ENCODE measurements at regions of chr9 and their contacts with region 1.

Region 1: GRCh38 chr9:127525401-127526187 is 74.3 kb downstream of the LRSAM1 start:
- DNase-seq: peak; percentile 36
- H3K4me3 Mint-ChIP-seq: no peak overlapping the region
- H3K27ac Mint-ChIP-seq: no peak overlapping the region
- H3K4me1 Mint-ChIP-seq: no peaks in the 10 kb centered on the region
- H3K27me3 Mint-ChIP-seq: no peaks in the 10 kb centered on the region

Region 2: GRCh38 chr9:127489471-127490115 is 36.0 kb before region 1 on chr9:
- CTCF ChIA-PET with region 1: no interaction called
- POLR2A ChIA-PET with region 1: no interaction called
- intact Hi-C with region 1: no loop called
- DNase-seq: no peak
- H3K4me3 Mint-ChIP-seq: no peak overlapping the region
- H3K27ac Mint-ChIP-seq: no peak overlapping the region
- H3K4me1 Mint-ChIP-seq: no peaks in the 10 kb centered on the region
- H3K27me3 Mint-ChIP-seq: no peaks in the 10 kb centered on the region

Region 3: DNA sequence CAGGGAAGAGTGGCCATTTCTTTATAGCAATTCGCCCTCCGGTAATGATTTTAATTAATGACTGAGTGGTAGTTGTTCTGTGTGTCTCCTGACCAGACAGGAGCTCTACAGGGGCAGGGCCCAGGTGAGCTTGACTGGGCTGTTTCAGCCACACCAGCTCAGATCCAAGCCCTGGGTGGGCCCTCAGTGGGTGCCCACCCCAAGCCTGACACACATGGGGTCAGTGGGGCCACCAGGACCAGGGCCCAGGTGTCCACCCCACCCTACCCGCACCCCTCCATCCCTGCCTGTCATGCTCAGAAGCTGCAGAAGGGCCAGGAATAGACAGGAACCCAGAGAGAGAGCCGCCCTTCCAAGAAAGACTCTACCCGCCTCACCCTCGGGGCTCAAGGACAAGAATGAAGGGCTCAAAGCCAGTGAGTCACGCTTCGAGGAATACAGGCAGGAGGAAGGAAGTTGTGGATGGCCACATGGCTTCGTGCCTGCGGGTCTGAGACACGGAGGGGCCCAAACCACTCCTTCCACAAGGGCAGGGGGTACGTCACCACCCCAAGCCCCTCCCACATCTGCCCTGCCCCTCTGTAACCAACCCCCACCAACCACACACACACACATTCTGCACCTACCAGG is 30.3 kb after region 1 on chr9:
- CTCF ChIA-PET with region 1: interaction called, 13 read pairs
- POLR2A ChIA-PET with region 1: no interaction called
- intact Hi-C with region 1: no loop called
- DNase-seq: peak; percentile 82
- H3K4me3 Mint-ChIP-seq: peak overlapping the region; percentile 32
- H3K27ac Mint-ChIP-seq: peak overlapping the region; percentile 82
- H3K4me1 Mint-ChIP-seq: peaks cover 38% of the 10 kb centered on the region
- H3K27me3 Mint-ChIP-seq: no peaks in the 10 kb centered on the region

Region 4: GRCh38 chr9:127578955-127579853 is 53.6 kb after region 1 on chr9:
- CTCF ChIA-PET with region 1: interaction called, 86 read pairs
- POLR2A ChIA-PET with region 1: no interaction called
- intact Hi-C with region 1: no loop called
- DNase-seq: peak; percentile 90
- H3K4me3 Mint-ChIP-seq: peak overlapping the region; percentile 72
- H3K27ac Mint-ChIP-seq: peak overlapping the region; percentile 80
- H3K4me1 Mint-ChIP-seq: peaks cover 31% of the 10 kb centered on the region
- H3K27me3 Mint-ChIP-seq: peaks cover 2% of the 10 kb centered on the region

Region 5: DNA sequence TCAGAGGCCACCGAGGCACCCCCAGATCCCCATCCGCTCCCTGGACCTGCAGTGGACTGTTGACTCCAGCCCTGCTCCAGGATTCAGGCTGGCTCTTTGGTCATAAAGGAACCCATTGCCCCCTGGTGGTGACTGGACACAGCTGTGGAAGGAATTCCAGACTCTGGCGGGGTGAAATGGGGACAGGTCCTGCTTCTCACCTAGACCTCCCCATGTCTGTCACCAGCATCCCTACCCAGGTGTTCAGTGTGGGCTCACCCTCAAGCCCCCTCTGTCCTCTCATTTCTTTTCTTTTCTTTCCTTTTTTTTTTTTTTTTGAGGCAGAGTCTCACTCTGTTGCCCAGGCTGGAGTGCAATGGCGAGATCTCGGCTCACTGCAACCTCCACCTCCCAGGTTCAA is 60.9 kb after region 1 on chr9:
- CTCF ChIA-PET with region 1: interaction called, 86 read pairs
- POLR2A ChIA-PET with region 1: no interaction called
- intact Hi-C with region 1: no loop called
- DNase-seq: peak; percentile 71
- H3K4me3 Mint-ChIP-seq: no peak overlapping the region
- H3K27ac Mint-ChIP-seq: no peak overlapping the region
- H3K4me1 Mint-ChIP-seq: peaks cover 9% of the 10 kb centered on the region
- H3K27me3 Mint-ChIP-seq: peaks cover 6% of the 10 kb centered on the region